PC-9 (cell line): ENCODE measurements at regions of chr12 and their contacts with region 1.

Region 1: GRCh38 chr12:6533923-6534694 is at the start of gene GAPDH:
- DNase-seq: peak; percentile 96 to 98
- H3K4me3 ChIP-seq: peak within 1 kb of the TSS; percentile 97
- H3K27ac ChIP-seq: peak within 1 kb of the TSS; percentile 83
- H3K4me1 ChIP-seq: peaks cover 56% of the 10 kb centered on the region
- H3K27me3 ChIP-seq: no peaks in the 10 kb centered on the region
- CTCF ChIP-seq: no peak
- total RNA-seq, gene GAPDH: 6,143 and 8,169 TPM in 2 replicates

Region 2: DNA sequence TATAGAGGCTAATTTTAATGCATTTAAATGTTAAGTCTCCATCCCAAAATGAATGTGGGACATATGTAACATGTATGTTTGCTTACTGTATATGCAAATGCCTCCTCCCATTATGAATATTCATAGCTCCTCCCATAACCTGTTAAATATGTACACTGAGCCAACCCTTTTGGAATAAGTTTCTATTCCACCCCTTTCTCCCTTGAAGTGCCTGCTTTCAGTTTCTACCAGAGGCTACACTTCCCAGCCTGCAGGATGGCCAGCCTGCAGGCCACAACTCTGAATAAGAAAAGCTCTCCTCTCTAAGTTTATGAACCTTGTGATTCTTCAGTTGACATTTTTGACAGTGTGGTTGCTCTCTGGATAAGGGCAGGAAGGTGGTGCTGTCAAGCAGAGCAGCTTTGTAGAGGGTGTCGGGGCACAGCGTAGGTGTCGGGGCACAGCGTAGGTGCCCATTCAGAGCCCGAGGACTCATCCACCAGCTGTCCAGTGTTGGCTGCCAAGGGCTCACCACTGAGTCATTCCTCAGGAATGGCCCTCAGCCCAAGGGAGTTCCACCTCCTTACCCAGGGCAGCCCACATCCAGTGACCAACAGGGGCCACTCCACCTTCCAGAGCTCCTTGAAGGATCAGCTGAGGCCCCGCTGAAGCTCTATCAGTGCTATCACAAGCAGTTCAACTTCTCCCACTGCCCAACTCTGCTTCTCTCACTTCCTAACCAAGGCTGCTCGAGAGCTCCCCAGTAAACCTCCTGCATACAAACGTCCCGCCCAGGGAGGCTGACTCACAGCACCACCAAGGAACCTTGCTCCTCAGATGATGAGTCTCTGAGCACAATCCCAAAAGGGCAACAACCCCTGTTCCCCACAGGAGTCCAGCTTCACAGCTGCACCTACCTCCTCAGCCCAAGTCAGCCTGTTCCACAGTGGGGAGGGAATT is 441.1 kb before region 1 on chr12:
- CTCF ChIA-PET with region 1: no interaction called
- POLR2A ChIA-PET with region 1: interaction called, 16 read pairs
- intact Hi-C with region 1: no loop called
- DNase-seq: peak; percentile 97
- H3K4me3 ChIP-seq: peak overlapping the region; percentile 37
- H3K27ac ChIP-seq: peak overlapping the region; percentile 80
- H3K4me1 ChIP-seq: peaks cover 59% of the 10 kb centered on the region
- H3K27me3 ChIP-seq: no peaks in the 10 kb centered on the region
- CTCF ChIP-seq: no peak; the same call in 1 of the 2 replicates

Region 3: DNA sequence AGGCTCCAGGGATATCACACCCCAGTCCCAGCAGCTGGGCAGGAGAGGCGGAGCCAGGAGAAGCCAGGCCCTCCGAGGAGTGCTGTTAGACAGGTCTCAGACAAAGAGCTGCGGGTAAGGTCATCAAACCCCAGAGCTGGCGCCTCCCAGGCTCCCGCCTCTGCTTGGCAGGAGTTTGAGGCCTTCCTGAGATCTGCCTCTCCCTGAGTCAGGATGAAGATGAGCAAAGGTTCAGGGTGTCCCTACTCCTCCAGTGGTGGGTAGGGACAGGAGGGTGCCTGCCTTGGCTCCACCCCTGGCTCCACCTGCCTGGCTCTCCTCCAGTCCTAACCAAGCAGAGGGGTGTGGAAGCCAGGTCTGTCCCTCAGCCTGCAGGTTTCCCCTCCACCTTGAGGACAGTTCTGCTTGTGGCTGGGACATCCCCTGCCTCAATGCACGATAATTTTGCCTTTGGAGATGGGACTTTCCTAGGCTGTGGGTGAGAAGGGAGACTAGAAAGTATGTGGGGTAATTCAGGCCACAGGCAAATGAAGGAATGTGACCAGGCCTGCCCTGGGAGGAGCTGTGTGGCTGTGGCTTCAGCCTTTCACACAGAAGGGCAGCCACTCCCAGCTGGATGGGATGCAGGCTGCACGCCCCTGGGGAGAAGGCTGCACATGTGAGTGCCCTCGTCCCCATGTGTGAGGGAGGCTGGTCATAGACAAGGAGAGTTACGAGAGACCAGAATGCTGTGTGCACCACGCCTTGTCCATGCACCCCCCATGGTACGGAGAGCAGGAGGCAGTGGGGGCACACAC is 221.4 kb before region 1 on chr12:
- CTCF ChIA-PET with region 1: no interaction called
- POLR2A ChIA-PET with region 1: interaction called, 29 read pairs
- intact Hi-C with region 1: no loop called
- DNase-seq: peak; percentile 96
- H3K4me3 ChIP-seq: peak overlapping the region; percentile 33; the same call in 1 of the 2 replicates
- H3K27ac ChIP-seq: peak overlapping the region; percentile 97
- H3K4me1 ChIP-seq: peaks cover 54% of the 10 kb centered on the region
- H3K27me3 ChIP-seq: no peaks in the 10 kb centered on the region
- CTCF ChIP-seq: no peak

Region 4: DNA sequence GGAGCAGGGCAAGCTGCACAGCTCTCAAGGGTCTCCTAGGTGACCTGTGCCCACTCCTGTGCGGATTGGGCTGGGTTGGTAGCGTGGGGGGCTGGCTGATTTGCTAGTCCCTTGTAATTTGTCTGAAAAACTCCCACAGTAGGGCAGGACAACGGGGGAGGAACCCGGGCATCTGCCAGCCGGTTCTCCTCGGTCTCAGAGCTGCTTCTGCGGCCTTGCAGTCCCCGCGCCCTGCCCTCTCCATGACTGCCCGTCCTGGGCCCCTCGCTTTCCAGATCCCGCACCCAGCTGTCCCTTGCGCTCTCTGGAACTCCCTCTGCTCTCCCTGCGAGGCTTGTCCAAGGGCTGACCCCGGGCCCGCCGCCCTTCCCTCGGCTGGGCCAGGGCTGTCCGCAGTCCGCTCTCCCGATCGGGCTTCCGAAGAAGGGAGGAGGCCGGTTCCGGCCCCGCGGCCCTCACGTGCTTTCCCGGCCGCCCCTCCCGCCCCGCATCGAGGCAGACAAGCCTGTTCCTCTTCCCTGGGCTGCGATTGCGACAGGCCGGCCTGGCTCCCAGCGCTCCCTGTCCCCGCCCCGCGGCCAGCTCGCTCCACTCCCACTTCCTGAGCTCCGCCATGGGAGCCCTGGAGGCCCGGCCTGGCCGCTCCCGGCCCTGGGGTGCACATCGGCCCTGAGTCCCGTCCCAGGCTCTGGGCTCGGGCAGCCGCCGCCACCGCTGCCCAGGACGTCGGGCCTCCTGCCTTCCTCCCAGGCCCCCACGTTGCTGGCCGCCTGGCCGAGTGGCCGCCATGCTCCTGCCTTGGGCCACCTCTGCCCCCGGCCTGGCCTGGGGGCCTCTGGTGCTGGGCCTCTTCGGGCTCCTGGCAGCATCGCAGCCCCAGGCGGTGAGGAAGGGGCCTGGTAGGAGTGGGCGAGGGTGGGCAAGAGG is 150.3 kb before region 1 on chr12 and contains the start of gene LTBR:
- CTCF ChIA-PET with region 1: no interaction called
- POLR2A ChIA-PET with region 1: interaction called, 33 read pairs
- intact Hi-C with region 1: no loop called
- DNase-seq: peak; percentile 88 to 99
- H3K4me3 ChIP-seq: peak within 1 kb of the TSS; percentile 77
- H3K27ac ChIP-seq: peak within 1 kb of the TSS; percentile 69
- H3K4me1 ChIP-seq: peaks cover 29% of the 10 kb centered on the region
- H3K27me3 ChIP-seq: no peaks in the 10 kb centered on the region
- CTCF ChIP-seq: 0 out of 2 replicates have a peak, but pooled peaks have one; percentile 20
- total RNA-seq, gene LTBR: 178 and 185 TPM in 2 replicates

Region 5: DNA sequence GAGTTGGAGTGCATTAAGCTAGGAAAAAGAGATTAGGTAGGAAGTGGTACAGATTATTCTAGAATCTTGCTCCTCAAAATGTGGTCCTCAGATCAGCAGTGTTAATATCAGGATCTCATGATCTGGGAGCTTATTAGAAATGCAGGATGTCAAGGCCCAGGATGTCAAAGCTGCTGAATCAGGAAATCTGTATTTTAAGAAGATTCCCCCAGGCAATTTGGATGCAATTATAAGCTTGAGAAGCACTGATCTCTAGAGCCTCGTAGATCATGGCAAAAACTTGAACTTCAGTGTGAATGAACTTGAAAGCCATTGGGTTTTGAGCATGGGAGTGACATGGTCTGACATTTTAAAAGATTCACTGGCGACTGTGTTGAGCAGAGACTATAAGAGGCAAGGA is 33.6 kb before region 1 on chr12:
- CTCF ChIA-PET with region 1: interaction called, 4 read pairs
- POLR2A ChIA-PET with region 1: interaction called, 36 read pairs
- intact Hi-C with region 1: no loop called
- DNase-seq: no peak
- H3K4me3 ChIP-seq: no peak overlapping the region
- H3K27ac ChIP-seq: no peak overlapping the region
- H3K4me1 ChIP-seq: peaks cover 5% of the 10 kb centered on the region; the same call in 1 of the 2 replicates
- H3K27me3 ChIP-seq: no peaks in the 10 kb centered on the region
- CTCF ChIP-seq: no peak

Region 6: GRCh38 chr12:6613776-6614512 is 79.8 kb after region 1 on chr12:
- CTCF ChIA-PET with region 1: interaction called, 3 read pairs
- POLR2A ChIA-PET with region 1: interaction called, 8 read pairs
- intact Hi-C with region 1: loop called (anchors 2 kb)
- DNase-seq: peak; percentile 91 to 97
- H3K4me3 ChIP-seq: peak overlapping the region; percentile 8; the same call in 1 of the 2 replicates
- H3K27ac ChIP-seq: peak overlapping the region; percentile 51
- H3K4me1 ChIP-seq: peaks cover 34% of the 10 kb centered on the region
- H3K27me3 ChIP-seq: no peaks in the 10 kb centered on the region
- CTCF ChIP-seq: no peak

Region 7: GRCh38 chr12:7229741-7230140 is 695.6 kb after region 1 on chr12:
- CTCF ChIA-PET with region 1: no interaction called
- POLR2A ChIA-PET with region 1: no interaction called
- intact Hi-C with region 1: no loop called
- DNase-seq: no peak
- H3K4me3 ChIP-seq: no peak overlapping the region
- H3K27ac ChIP-seq: no peak overlapping the region
- H3K4me1 ChIP-seq: no peaks in the 10 kb centered on the region
- H3K27me3 ChIP-seq: 0 out of 2 replicates have a peak, but pooled peaks cover 8% of the 10 kb centered on the region
- CTCF ChIP-seq: no peak

Region 8: GRCh38 chr12:7369274-7369729 is 835.2 kb after region 1 on chr12:
- CTCF ChIA-PET with region 1: no interaction called
- POLR2A ChIA-PET with region 1: interaction called, 10 read pairs
- intact Hi-C with region 1: no loop called
- DNase-seq: peak; percentile 72 to 89
- H3K4me3 ChIP-seq: peak overlapping the region; percentile 40; the same call in 1 of the 2 replicates
- H3K27ac ChIP-seq: no peak overlapping the region
- H3K4me1 ChIP-seq: no peaks in the 10 kb centered on the region
- H3K27me3 ChIP-seq: no peaks in the 10 kb centered on the region
- CTCF ChIP-seq: no peak